ENCODE measurements at regions of chr17 and their contacts with region 1.

Region 1: GRCh38 chr17:60677308-60678124 is at the start of gene BCAS3:
- DNase-seq: peak; percentile 98
- ATAC-seq: peak; percentile 94
- H3K4me3 ChIP-seq: peak within 1 kb of the TSS; percentile 78 to 99 (median 96)
- H3K4me3 Mint-ChIP-seq: peak within 1 kb of the TSS; percentile 97
- H3K27ac ChIP-seq: peak within 1 kb of the TSS; percentile 67 to 79
- H3K27ac Mint-ChIP-seq: peak within 1 kb of the TSS; percentile 96
- H3K4me1 ChIP-seq: peaks cover 9 to 12% of the 10 kb centered on the region in 2 donors
- H3K4me1 Mint-ChIP-seq: peaks cover 19% of the 10 kb centered on the region
- H3K27me3 ChIP-seq: no peaks in the 10 kb centered on the region
- H3K27me3 Mint-ChIP-seq: no peaks in the 10 kb centered on the region
- CTCF ChIP-seq: no peak
- total RNA-seq, gene BCAS3: 71.8 and 73.4 TPM in 2 replicates

Region 2: DNA sequence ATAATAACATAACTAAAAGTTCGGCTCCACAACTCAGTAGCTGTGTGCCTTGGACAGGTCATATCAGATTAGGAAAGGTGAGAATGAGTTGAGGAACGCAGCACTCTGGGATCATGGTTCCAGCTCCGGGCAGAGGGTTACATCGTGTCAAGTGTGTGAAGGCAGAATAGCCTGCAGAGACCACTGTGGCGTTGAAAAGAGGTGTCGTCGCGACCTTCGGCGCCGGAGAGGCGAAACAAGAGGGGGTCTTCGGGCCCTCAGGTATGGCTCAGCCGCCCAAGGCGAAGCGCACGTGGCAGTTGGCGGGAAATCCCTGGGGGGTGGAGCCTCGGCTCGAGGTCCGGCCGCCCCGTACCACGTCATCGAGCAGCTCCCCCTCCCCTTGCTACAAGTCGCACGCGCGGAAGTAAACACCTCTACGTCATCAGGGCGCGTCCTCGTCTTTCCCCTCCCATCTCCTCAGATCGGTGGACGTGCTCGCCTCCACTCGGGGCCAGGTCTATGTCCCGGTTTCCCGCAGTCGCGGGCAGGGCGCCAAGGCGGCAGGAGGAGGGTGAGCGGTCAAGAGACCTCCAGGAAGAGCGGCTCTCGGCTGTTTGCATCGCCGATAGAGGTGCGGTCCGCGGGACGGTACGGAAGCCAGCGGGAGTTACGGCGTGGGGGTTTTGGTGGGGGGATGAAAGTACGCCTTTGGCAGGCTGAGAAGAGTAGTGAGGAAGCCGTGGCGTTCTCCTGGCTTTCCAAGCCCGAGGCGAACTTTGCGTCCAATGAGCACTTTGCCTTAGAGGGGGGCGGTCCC is 1112.1 kb before region 1 on chr17 and contains the start of gene DHX40:
- CTCF ChIA-PET with region 1: no interaction called
- POLR2A ChIA-PET with region 1: no interaction called
- intact Hi-C with region 1: loop called (anchors 5 kb)
- DNase-seq: peak; percentile 98
- ATAC-seq: peak; percentile 96
- H3K4me3 ChIP-seq: peak within 1 kb of the TSS; percentile 91 to 100 (median 96)
- H3K4me3 Mint-ChIP-seq: peak within 1 kb of the TSS; percentile 99
- H3K27ac ChIP-seq: peak within 1 kb of the TSS; percentile 81 to 92
- H3K27ac Mint-ChIP-seq: peak within 1 kb of the TSS; percentile 99
- H3K4me1 ChIP-seq: peaks cover 13 to 15% of the 10 kb centered on the region in 2 donors
- H3K4me1 Mint-ChIP-seq: peaks cover 19% of the 10 kb centered on the region
- H3K27me3 ChIP-seq: no peaks in the 10 kb centered on the region
- H3K27me3 Mint-ChIP-seq: no peaks in the 10 kb centered on the region
- CTCF ChIP-seq: no peak
- total RNA-seq, gene DHX40: 28.7 and 30.4 TPM in 2 replicates

Region 3: GRCh38 chr17:59964482-59965328 is 712.8 kb before region 1 on chr17 and contains the start of gene RNFT1:
- CTCF ChIA-PET with region 1: no interaction called
- POLR2A ChIA-PET with region 1: no interaction called
- intact Hi-C with region 1: loop called (anchors 5 kb)
- DNase-seq: peak; percentile 93
- ATAC-seq: peak; percentile 92
- H3K4me3 ChIP-seq: peak within 1 kb of the TSS; percentile 71 to 98 (median 92)
- H3K4me3 Mint-ChIP-seq: peak within 1 kb of the TSS; percentile 94
- H3K27ac ChIP-seq: peak within 1 kb of the TSS; percentile 77 to 91
- H3K27ac Mint-ChIP-seq: peak within 1 kb of the TSS; percentile 95
- H3K4me1 ChIP-seq: peaks cover 13 to 19% of the 10 kb centered on the region in 2 donors
- H3K4me1 Mint-ChIP-seq: peaks cover 20% of the 10 kb centered on the region
- H3K27me3 ChIP-seq: no peaks in the 10 kb centered on the region
- H3K27me3 Mint-ChIP-seq: no peaks in the 10 kb centered on the region
- CTCF ChIP-seq: no peak
- total RNA-seq, gene RNFT1: 46.5 and 49.4 TPM in 2 replicates

Region 4: DNA sequence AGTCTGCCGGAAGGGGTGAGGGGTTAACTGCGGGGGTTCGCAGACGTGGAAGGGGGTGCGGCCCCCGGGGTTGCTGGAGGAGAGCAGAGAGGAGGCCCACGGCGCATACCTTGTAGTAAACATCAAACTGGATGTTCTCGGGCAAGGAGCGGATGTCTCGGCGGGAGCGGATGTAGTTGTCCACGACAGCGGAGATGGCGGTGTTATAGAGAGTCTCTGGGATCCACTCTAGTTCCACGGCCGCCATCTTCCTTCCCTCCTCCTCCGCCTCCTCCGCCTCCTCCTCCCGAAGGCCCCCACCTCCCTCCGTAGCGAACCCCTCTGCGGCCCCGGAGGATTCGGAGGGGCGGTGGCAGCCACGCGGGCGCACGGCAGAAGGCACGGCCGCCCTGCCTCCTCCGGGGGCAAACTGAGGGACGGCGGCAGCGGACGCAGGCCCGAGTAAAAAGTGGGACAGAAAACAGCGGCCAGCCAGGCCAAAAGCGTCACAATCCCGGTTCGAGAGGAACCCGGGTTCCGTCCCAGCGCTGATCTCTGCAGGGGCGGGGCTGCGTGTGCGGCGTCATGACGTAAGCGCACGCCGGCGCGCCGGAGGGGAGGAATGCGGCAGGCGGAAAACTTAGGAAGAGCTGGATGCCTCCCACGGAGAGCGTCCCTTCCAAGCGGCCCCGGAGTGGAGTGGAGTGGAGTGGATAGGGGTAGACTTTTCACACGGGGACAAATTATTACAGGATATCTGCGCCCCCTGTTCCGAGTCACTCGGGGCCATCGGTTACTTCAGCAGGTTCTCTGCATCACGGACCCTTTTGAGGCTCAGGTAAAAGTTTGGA is 151.6 kb before region 1 on chr17 and contains the start of gene APPBP2:
- CTCF ChIA-PET with region 1: no interaction called
- POLR2A ChIA-PET with region 1: no interaction called
- intact Hi-C with region 1: loop called (anchors 1 kb)
- DNase-seq: peak; percentile 87
- ATAC-seq: peak; percentile 88
- H3K4me3 ChIP-seq: peak within 1 kb of the TSS; percentile 66 to 98 (median 96)
- H3K4me3 Mint-ChIP-seq: peak within 1 kb of the TSS; percentile 100
- H3K27ac ChIP-seq: peak within 1 kb of the TSS; percentile 88 to 94
- H3K27ac Mint-ChIP-seq: peak within 1 kb of the TSS; percentile 98
- H3K4me1 ChIP-seq: peaks cover 17 to 21% of the 10 kb centered on the region in 2 donors
- H3K4me1 Mint-ChIP-seq: peaks cover 45% of the 10 kb centered on the region
- H3K27me3 ChIP-seq: no peaks in the 10 kb centered on the region
- H3K27me3 Mint-ChIP-seq: no peaks in the 10 kb centered on the region
- CTCF ChIP-seq: no peak
- total RNA-seq, gene APPBP2: 38.8 and 44.1 TPM in 2 replicates

Region 5: DNA sequence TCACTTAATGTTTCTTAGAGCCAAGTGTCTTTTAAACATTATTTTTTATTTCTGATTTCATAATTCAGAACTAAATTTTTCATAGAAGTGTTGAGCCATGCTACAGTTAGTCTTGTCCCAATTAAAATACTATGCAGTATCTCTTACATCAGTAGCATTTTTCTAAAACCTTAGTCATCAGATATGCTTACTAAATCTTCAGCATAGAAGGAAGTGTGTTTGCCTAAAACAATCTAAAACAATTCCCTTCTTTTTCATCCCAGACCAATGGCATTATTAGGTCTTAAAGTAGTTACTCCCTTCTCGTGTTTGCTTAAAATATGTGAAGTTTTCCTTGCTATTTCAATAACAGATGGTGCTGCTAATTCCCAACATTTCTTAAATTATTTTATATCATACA is 13.5 kb before region 1 on chr17:
- CTCF ChIA-PET with region 1: no interaction called
- POLR2A ChIA-PET with region 1: no interaction called
- intact Hi-C with region 1: no loop called
- DNase-seq: no peak
- ATAC-seq: no peak
- H3K4me3 ChIP-seq: no peak overlapping the region
- H3K4me3 Mint-ChIP-seq: no peak overlapping the region
- H3K27ac ChIP-seq: no peak overlapping the region
- H3K27ac Mint-ChIP-seq: no peak overlapping the region
- H3K4me1 ChIP-seq: no peaks in the 10 kb centered on the region
- H3K4me1 Mint-ChIP-seq: no peaks in the 10 kb centered on the region
- H3K27me3 ChIP-seq: no peaks in the 10 kb centered on the region
- H3K27me3 Mint-ChIP-seq: no peaks in the 10 kb centered on the region
- CTCF ChIP-seq: no peak

Region 6: DNA sequence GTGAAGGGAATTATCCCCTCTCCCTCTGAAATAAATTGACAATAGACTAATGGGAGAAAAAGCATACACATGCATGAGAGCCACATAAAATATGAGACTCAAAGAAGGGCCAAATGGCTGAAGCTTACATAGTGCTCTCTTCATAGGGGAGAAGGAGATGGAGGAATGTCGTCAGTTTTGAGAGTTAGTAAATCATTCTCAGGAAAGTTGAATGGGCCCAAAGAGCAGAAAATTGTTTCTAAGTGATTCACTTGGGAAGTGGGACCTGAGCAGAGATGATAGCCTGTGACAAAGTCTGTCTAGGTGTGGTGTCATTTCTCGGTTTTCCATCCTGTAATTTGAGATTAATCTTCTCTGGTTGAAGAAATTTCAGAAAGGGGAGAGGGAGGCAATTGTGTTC is 35.2 kb after region 1 on chr17:
- CTCF ChIA-PET with region 1: no interaction called
- POLR2A ChIA-PET with region 1: no interaction called
- intact Hi-C with region 1: no loop called
- DNase-seq: no peak
- ATAC-seq: no peak
- H3K4me3 ChIP-seq: no peak overlapping the region
- H3K4me3 Mint-ChIP-seq: no peak overlapping the region
- H3K27ac ChIP-seq: no peak overlapping the region
- H3K27ac Mint-ChIP-seq: no peak overlapping the region
- H3K4me1 ChIP-seq: no peaks in the 10 kb centered on the region
- H3K4me1 Mint-ChIP-seq: no peaks in the 10 kb centered on the region
- H3K27me3 ChIP-seq: no peaks in the 10 kb centered on the region
- H3K27me3 Mint-ChIP-seq: no peaks in the 10 kb centered on the region
- CTCF ChIP-seq: no peak